Aorta (tissue), 5 donors: ENCODE measurements at regions of chr7 and their contacts with region 1.

Region 1: GRCh38 chr7:23055582-23056178 is 41.8 kb upstream of the HYCC1 start:
- DNase-seq: no peak
- ATAC-seq: peak; percentile 74
- H3K4me3 ChIP-seq: no peak overlapping the region
- H3K27ac ChIP-seq: no peak overlapping the region
- H3K4me1 ChIP-seq: no peaks in the 10 kb centered on the region
- H3K27me3 ChIP-seq: no peaks in the 10 kb centered on the region

Region 2: DNA sequence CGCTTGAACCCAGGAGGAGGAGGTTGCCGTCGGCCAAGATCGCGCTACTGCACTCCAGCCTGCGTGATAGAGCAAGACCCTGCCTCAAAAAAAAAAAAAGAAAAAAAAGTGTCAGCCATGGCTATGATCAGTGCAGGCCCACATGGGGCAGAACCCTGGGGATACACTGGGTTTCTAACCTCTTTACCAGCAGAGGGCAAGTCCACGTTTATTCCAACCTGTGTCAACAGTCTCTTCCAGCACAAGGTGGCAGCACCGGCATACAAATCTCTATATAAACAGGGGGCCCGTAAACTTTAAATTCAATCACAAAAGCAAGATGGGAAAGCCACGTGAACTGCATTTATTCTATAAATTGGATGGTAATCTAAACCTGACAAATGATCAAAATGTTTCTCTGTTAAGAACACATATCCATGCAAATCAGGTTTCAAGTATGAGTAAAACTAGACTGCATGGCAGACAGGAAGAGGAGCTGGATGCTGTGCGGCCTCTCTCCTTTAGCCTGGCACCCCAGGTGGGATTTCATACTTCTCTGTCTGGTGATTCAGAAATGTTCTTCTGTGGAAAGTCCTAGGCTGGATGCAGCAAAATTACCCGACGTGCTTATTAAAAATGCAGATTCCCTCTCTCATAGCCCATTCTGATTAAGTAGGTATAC is 495.7 kb before region 1 on chr7:
- intact Hi-C with region 1: loop called (anchors 1 to 5 kb)
- DNase-seq: peak; percentile 78 to 83
- ATAC-seq: peak; percentile 86
- H3K4me3 ChIP-seq: no peak overlapping the region
- H3K27ac ChIP-seq: no peak overlapping the region
- H3K4me1 ChIP-seq: peaks cover 4 to 5% of the 10 kb centered on the region in 2 donors
- H3K27me3 ChIP-seq: no peaks in the 10 kb centered on the region

Region 3: DNA sequence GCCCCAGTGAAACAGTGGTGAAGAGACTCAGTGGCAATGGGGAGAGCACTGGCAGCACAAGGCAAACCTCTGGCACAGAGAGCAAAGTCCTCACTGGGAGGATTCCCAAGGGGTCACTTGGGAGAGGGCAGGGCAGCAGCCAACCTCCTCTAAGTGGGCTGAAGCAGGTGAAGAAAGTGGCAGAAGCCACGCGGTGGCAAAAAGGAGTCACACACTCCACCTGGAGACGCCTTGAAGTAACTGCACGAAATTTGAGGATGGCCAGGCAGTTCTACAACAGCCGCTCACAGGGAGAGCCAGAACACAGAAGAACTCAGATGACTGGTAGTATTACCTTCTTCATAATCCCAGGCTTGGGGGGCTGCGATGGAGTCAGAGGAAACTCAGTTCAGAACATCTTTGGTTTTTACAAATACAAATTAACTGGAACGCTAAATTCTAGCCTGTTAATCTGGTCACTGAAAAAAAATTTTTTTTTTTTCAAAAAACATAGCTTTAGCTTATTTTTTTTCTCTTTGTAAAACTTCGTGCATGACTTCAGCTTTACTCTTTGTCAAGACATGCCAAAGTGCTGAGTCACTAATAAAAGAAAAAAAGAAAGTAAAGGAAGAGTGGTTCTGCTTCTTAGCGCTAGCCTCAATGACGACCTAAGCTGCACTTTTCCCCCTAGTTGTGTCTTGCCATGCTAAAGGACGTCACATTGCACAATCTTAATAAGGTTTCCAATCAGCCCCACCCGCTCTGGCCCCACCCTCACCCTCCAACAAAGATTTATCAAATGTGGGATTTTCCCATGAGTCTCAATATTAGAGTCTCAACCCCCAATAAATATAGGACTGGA is 329.1 kb before region 1 on chr7:
- intact Hi-C with region 1: loop called in 1 of 2 experiments (anchors 10 kb)
- DNase-seq: peak in 1 of 2 donors; percentile 61
- ATAC-seq: peak; percentile 80
- H3K4me3 ChIP-seq: peak overlapping the region in 1 of 2 donors; percentile 15
- H3K27ac ChIP-seq: peak overlapping the region in 1 of 2 donors; percentile 0
- H3K4me1 ChIP-seq: no peaks in the 10 kb centered on the region
- H3K27me3 ChIP-seq: no peaks in the 10 kb centered on the region

Region 4: GRCh38 chr7:22822486-22823141 is 233.1 kb before region 1 on chr7 and contains the start of gene TOMM7:
- intact Hi-C with region 1: loop called (anchors 2 to 10 kb)
- DNase-seq: peak; percentile 94 to 96
- ATAC-seq: peak; percentile 98
- H3K4me3 ChIP-seq: peak within 1 kb of the TSS; percentile 85 to 94
- H3K27ac ChIP-seq: peak within 1 kb of the TSS in 1 of 2 donors; percentile 26
- H3K4me1 ChIP-seq: peaks cover 0 to 1% of the 10 kb centered on the region in 2 donors
- H3K27me3 ChIP-seq: no peaks in the 10 kb centered on the region
- total RNA-seq, gene TOMM7: 250 to 305 TPM

Region 5: DNA sequence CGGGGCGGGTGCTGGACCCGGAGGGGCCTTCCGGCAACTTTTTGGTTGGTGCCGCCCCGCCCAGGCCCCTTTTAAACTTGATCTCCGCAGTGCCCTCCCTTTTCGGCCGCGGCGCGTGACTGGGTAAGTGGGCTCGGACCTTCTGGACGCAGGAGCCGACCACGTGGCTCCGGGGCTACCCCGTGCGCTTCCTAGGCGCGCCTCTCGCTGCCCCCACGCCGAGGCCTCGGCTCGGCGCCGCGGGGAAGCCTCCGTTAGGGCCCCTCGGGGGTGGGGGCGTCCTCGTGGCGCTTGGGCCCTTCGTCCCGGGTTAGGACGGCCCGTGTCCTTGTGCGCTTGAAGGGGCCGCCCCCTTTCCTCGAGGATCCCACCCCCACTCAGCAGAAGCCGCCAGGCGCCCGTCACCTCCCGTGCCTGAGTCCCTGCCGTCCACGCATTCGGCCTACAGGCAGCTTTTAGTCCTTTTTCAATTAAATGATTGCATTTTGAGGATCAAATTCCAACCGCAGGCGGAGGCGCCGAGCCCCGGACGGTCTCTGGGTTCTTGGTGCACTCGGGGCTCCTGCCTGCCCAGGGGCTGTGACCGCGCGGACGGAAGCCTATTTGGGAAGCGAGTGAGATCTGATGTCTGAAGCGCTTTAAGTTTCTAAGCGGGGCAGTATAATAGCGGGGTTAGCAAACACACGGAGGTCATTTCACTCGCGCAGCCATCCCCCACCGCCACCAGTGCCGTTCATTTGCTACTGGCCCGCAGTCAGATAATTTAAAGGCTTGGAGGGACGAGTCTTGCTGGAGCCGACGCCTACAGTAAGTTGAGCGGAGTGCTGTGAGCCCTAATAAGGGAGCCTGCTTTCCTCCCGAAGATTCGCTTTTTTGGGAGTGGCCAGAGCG is 201.3 kb before region 1 on chr7:
- intact Hi-C with region 1: loop called in 1 of 2 experiments (anchors 10 kb)
- DNase-seq: peak; percentile 95 to 96
- ATAC-seq: peak; percentile 92
- H3K4me3 ChIP-seq: peak overlapping the region; percentile 61 to 66
- H3K27ac ChIP-seq: peak overlapping the region; percentile 15 to 66
- H3K4me1 ChIP-seq: peaks cover 0 to 3% of the 10 kb centered on the region in 2 donors
- H3K27me3 ChIP-seq: no peaks in the 10 kb centered on the region

Region 6: GRCh38 chr7:22934473-22935065 is 121.1 kb before region 1 on chr7:
- intact Hi-C with region 1: loop called in 1 of 2 experiments (anchors 10 kb)
- DNase-seq: no peak
- ATAC-seq: peak; percentile 53
- H3K4me3 ChIP-seq: no peak overlapping the region
- H3K27ac ChIP-seq: peak overlapping the region; percentile 40 to 82
- H3K4me1 ChIP-seq: peaks cover 0 to 7% of the 10 kb centered on the region in 2 donors
- H3K27me3 ChIP-seq: no peaks in the 10 kb centered on the region

Region 7: DNA sequence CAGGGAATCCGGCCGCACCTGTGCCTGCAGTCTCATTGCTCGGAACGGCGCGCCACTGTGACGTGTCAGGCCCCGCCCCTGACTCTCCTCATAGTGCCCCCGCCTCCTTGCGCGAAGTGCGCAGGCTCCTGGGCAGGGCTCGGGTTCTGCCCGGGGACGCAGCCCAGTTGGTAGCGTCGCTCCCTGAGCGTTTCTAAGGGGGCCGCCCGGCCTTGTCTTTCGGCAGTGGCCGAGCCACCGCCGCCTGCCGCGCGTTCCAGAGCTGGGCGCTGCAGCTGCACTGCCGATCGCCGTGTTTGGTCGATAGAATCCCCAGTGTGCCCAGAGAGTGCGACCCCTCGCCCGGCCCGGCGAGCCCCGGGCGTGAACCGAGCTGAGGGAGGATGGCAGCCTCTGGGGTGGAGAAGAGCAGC is 50.0 kb after region 1 on chr7 and contains the start of gene KLHL7:
- intact Hi-C with region 1: no loop called
- DNase-seq: peak; percentile 98 to 99
- ATAC-seq: peak; percentile 99
- H3K4me3 ChIP-seq: peak within 1 kb of the TSS; percentile 74 to 88
- H3K27ac ChIP-seq: peak within 1 kb of the TSS in 1 of 2 donors; percentile 38
- H3K4me1 ChIP-seq: peaks cover 0 to 5% of the 10 kb centered on the region in 2 donors
- H3K27me3 ChIP-seq: no peaks in the 10 kb centered on the region
- total RNA-seq, gene KLHL7: 21.0 to 23.0 TPM

Region 8: GRCh38 chr7:23373151-23374004 is 317.7 kb after region 1 on chr7:
- intact Hi-C with region 1: no loop called
- DNase-seq: no peak
- ATAC-seq: no peak
- H3K4me3 ChIP-seq: no peak overlapping the region
- H3K27ac ChIP-seq: no peak overlapping the region
- H3K4me1 ChIP-seq: no peaks in the 10 kb centered on the region
- H3K27me3 ChIP-seq: no peaks in the 10 kb centered on the region